CD8-positive, alpha-beta T cell (primary cell): ENCODE measurements at regions of chr19 and their contacts with region 1.

Region 1: GRCh38 chr19:52048555-52049501 is at the start of gene ZNF432:
- DNase-seq: peak; percentile 62 to 91 (median 84)
- ATAC-seq: peak; percentile 83
- H3K4me3 ChIP-seq: peak within 1 kb of the TSS; percentile 92 to 94
- H3K4me3 Mint-ChIP-seq: peak within 1 kb of the TSS; percentile 99
- H3K27ac ChIP-seq: peak within 1 kb of the TSS; percentile 95 to 97
- H3K27ac Mint-ChIP-seq: peak within 1 kb of the TSS; percentile 100
- H3K4me1 ChIP-seq: peaks cover 7% of the 10 kb centered on the region
- H3K4me1 Mint-ChIP-seq: peaks cover 29% of the 10 kb centered on the region
- H3K27me3 ChIP-seq: no peaks in the 10 kb centered on the region
- H3K27me3 Mint-ChIP-seq: no peaks in the 10 kb centered on the region
- CTCF ChIP-seq: no peak
- total RNA-seq, gene ZNF432: 16.0 to 18.4 TPM

Region 2: GRCh38 chr19:50514346-50515167 is 1534.3 kb before region 1 on chr19:
- CTCF ChIA-PET with region 1: no interaction called
- POLR2A ChIA-PET with region 1: no interaction called
- intact Hi-C with region 1: no loop called
- DNase-seq: no peak
- ATAC-seq: no peak
- H3K4me3 ChIP-seq: no peak overlapping the region
- H3K4me3 Mint-ChIP-seq: peak overlapping the region; percentile 26
- H3K27ac ChIP-seq: no peak overlapping the region
- H3K27ac Mint-ChIP-seq: no peak overlapping the region
- H3K4me1 ChIP-seq: peaks cover 16% of the 10 kb centered on the region
- H3K4me1 Mint-ChIP-seq: peaks cover 13% of the 10 kb centered on the region
- H3K27me3 ChIP-seq: no peaks in the 10 kb centered on the region
- H3K27me3 Mint-ChIP-seq: peaks cover 4% of the 10 kb centered on the region
- CTCF ChIP-seq: no peak

Region 3: GRCh38 chr19:51926784-51927742 is 121.8 kb before region 1 on chr19 and contains the start of gene ZNF613:
- CTCF ChIA-PET with region 1: no interaction called
- POLR2A ChIA-PET with region 1: interaction called, 3 read pairs
- intact Hi-C with region 1: loop called (anchors 1 to 2 kb)
- DNase-seq: peak; percentile 63 to 92 (median 85)
- ATAC-seq: peak; percentile 86
- H3K4me3 ChIP-seq: peak within 1 kb of the TSS; percentile 88 to 95
- H3K4me3 Mint-ChIP-seq: peak within 1 kb of the TSS; percentile 95
- H3K27ac ChIP-seq: peak within 1 kb of the TSS; percentile 55 to 65
- H3K27ac Mint-ChIP-seq: peak within 1 kb of the TSS; percentile 91
- H3K4me1 ChIP-seq: peaks cover 7% of the 10 kb centered on the region
- H3K4me1 Mint-ChIP-seq: peaks cover 23% of the 10 kb centered on the region
- H3K27me3 ChIP-seq: no peaks in the 10 kb centered on the region
- H3K27me3 Mint-ChIP-seq: no peaks in the 10 kb centered on the region
- CTCF ChIP-seq: no peak
- total RNA-seq, gene ZNF613: 0.58 to 1.1 TPM

Region 4: GRCh38 chr19:52007806-52008557 is 40.8 kb before region 1 on chr19 and contains the start of gene ZNF615:
- CTCF ChIA-PET with region 1: no interaction called
- POLR2A ChIA-PET with region 1: interaction called, 3 read pairs
- intact Hi-C with region 1: loop called (anchors 1 kb)
- DNase-seq: peak; percentile 76 to 95 (median 89)
- ATAC-seq: peak; percentile 92
- H3K4me3 ChIP-seq: peak within 1 kb of the TSS; percentile 81 to 97
- H3K4me3 Mint-ChIP-seq: peak within 1 kb of the TSS; percentile 98
- H3K27ac ChIP-seq: peak within 1 kb of the TSS; percentile 78 to 89
- H3K27ac Mint-ChIP-seq: peak within 1 kb of the TSS; percentile 95
- H3K4me1 ChIP-seq: peaks cover 4% of the 10 kb centered on the region
- H3K4me1 Mint-ChIP-seq: peaks cover 21% of the 10 kb centered on the region
- H3K27me3 ChIP-seq: no peaks in the 10 kb centered on the region
- H3K27me3 Mint-ChIP-seq: no peaks in the 10 kb centered on the region
- CTCF ChIP-seq: no peak
- total RNA-seq, gene ZNF615: 14.7 to 17.2 TPM

Region 5: DNA sequence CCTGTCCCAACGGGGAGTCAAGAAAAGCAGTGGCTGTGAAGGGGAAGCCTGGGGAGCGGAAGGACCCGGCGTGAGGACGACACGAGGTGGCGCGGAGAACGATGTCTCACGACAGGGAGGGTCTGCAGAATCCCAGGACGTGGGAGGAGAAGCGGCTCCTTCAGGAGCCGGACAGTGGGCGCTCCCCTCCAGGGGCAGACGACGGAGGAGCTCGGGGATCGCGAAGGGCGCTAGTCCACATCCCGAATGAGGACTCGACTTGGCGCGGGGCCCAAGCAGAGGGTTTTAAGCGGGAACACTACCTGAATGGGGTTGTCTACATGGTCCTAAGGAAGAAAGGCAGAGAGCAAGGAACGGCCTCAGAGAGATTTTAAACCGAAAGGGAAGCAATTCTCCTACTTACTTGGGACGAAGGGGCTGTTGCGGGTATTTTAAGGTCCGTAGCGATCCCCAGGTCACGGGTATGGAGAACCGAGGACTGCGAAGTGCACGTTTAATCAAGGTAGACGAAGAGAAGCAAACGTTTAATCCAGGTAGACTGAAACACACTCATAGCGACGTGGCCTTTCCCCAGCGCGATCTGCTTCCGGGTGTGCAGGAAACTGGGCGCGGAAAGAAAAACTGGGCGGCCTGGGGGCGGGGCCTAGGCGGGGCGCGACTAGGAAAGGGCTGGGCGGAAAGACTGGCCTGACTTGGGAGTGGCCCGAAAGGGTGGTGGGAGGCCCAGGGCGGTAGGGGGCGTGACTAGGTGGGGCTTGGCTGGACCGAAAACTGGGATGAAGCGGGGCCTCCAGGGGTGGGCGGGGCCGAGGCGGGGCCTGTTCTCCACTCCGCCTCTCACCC is 46.6 kb after region 1 on chr19 and contains the start of gene ZNF841:
- CTCF ChIA-PET with region 1: no interaction called
- POLR2A ChIA-PET with region 1: interaction called, 4 read pairs
- intact Hi-C with region 1: loop called (anchors 2 kb)
- DNase-seq: peak; percentile 70 to 89 (median 83)
- ATAC-seq: peak; percentile 97
- H3K4me3 ChIP-seq: peak within 1 kb of the TSS; percentile 96 to 99
- H3K4me3 Mint-ChIP-seq: peak within 1 kb of the TSS; percentile 97
- H3K27ac ChIP-seq: peak within 1 kb of the TSS; percentile 86 to 87
- H3K27ac Mint-ChIP-seq: peak within 1 kb of the TSS; percentile 93
- H3K4me1 ChIP-seq: peaks cover 16% of the 10 kb centered on the region
- H3K4me1 Mint-ChIP-seq: peaks cover 41% of the 10 kb centered on the region
- H3K27me3 ChIP-seq: no peaks in the 10 kb centered on the region
- H3K27me3 Mint-ChIP-seq: no peaks in the 10 kb centered on the region
- CTCF ChIP-seq: no peak
- total RNA-seq, gene ZNF841: 18.9 to 19.9 TPM

Region 6: GRCh38 chr19:52196256-52196967 is 147.6 kb after region 1 on chr19:
- CTCF ChIA-PET with region 1: no interaction called
- POLR2A ChIA-PET with region 1: no interaction called
- intact Hi-C with region 1: no loop called
- DNase-seq: no peak
- ATAC-seq: no peak
- H3K4me3 ChIP-seq: no peak overlapping the region
- H3K4me3 Mint-ChIP-seq: no peak overlapping the region
- H3K27ac ChIP-seq: no peak overlapping the region
- H3K27ac Mint-ChIP-seq: peak overlapping the region; percentile 18
- H3K4me1 ChIP-seq: peaks cover 48% of the 10 kb centered on the region
- H3K4me1 Mint-ChIP-seq: peaks cover 82% of the 10 kb centered on the region
- H3K27me3 ChIP-seq: no peaks in the 10 kb centered on the region
- H3K27me3 Mint-ChIP-seq: no peaks in the 10 kb centered on the region
- CTCF ChIP-seq: no peak

Region 7: DNA sequence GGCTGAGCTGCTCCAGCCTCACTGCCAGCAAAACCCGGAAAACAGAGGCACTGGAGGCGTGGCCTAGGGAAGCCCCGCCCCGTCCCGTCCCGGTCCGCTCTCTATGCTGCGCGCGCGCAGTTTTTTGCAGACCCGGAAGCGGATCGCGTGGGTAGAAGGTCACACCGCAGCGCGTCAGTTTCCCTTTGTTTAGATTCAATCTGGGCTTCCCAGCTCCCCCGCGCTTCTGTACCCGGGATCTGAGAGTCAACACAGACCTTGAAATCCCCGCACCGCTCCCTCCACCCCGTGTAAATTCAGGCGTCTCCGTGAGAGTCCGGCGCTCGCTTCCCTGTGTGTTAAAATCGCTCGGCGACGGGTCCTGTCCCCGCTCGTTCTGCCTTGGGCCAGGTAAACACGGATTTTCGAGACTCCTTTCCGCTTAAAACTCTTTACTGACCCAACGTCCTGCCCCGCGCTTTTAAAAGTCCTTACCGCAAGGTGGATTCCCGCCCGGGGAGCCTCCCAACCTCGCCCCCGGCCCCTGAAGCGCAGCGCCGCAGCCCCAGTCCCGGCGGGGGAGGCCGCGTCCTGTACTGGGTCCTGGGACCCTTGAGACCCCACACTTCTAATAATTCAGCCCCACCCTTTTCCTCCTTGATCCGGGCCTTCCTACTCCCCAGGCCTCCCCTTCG is 287.4 kb after region 1 on chr19 and contains the start of gene ZNF610:
- CTCF ChIA-PET with region 1: no interaction called
- POLR2A ChIA-PET with region 1: no interaction called
- intact Hi-C with region 1: loop called in 1 of 2 experiments (anchors 1 kb)
- DNase-seq: peak; percentile 71 to 91 (median 84)
- ATAC-seq: peak; percentile 96
- H3K4me3 ChIP-seq: peak within 1 kb of the TSS; percentile 70 to 87
- H3K4me3 Mint-ChIP-seq: peak within 1 kb of the TSS; percentile 98
- H3K27ac ChIP-seq: peak within 1 kb of the TSS; percentile 80 to 85
- H3K27ac Mint-ChIP-seq: peak within 1 kb of the TSS; percentile 99
- H3K4me1 ChIP-seq: peaks cover 6% of the 10 kb centered on the region
- H3K4me1 Mint-ChIP-seq: peaks cover 14% of the 10 kb centered on the region
- H3K27me3 ChIP-seq: no peaks in the 10 kb centered on the region
- H3K27me3 Mint-ChIP-seq: no peaks in the 10 kb centered on the region
- CTCF ChIP-seq: no peak
- total RNA-seq, gene ZNF610: 0.33 TPM